ENCODE measurements at regions of chr6 and their contacts with region 1.

Region 1: GRCh38 chr6:133553652-133554051 is 312.5 kb downstream of the EYA4 start:
- DNase-seq: peak; percentile 17 to 31
- ATAC-seq: peak in 1 of 2 donors; percentile 26
- H3K4me3 ChIP-seq: no peak overlapping the region
- H3K27ac ChIP-seq: peak overlapping the region in 1 of 4 donors; percentile 79
- H3K4me1 ChIP-seq: peaks cover 33 to 41% of the 10 kb centered on the region in 2 donors
- H3K27me3 ChIP-seq: no peaks in the 10 kb centered on the region
- CTCF ChIP-seq: peak; percentile 48 to 74 (median 62)
- POLR2A ChIP-seq: no peak

Region 2: GRCh38 chr6:132820629-132821381 is 732.8 kb before region 1 on chr6:
- in situ Hi-C with region 1: loop called in 3 of 4 experiments (anchors 10 to 25 kb)
- intact Hi-C with region 1: loop called (anchors 2 kb)
- DNase-seq: no peak
- ATAC-seq: peak; percentile 13 to 30
- H3K4me3 ChIP-seq: no peak overlapping the region
- H3K27ac ChIP-seq: peak overlapping the region in 3 of 4 donors; percentile 21 to 85 (median 62)
- H3K4me1 ChIP-seq: peaks cover 30 to 32% of the 10 kb centered on the region in 2 donors
- H3K27me3 ChIP-seq: no peaks in the 10 kb centered on the region
- CTCF ChIP-seq: no peak
- POLR2A ChIP-seq: no peak

Region 3: DNA sequence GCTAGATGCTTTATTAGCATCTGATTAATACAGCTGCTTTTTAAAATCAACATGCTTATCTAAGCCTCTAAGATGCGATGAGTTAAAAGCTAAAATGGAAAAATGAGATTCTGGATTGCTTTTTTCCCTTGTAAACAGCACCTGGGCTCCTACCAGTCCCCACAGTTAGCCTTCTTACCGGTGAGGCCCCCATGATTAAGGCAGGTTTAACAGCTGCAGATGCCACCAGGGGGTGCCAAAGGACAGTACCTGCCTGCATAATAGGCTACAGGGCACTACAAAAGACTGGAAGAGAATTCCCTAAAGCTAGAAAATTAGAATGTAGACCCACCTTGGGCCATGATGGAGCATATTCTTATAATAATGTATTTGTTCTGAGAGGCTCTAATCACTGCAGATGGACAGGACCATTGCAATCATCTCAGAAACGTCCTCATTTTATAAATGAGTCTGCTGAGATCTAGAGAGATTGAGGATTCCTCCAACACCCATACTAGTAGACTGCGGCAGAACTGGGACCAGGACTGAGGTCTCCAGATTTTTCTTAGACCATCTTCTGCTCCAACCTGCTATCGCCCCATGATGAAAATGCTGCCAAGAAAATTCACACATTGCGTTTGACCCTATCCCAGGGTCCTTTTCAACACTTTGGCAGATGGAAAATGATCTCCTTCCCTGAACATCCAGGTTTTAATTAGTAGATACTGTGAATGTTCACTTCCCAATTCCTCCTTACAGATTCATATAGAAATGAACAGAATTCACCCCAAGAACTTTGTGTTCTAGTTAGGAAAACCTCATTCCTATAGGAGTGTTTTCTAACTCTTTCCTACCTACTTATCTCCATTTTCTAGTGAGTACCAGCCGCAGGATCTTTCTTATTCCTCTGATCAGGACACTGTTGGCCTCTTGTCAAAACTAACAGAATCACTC is 590.5 kb before region 1 on chr6:
- in situ Hi-C with region 1: loop called (anchors 5 to 25 kb)
- intact Hi-C with region 1: loop called (anchors 1 kb)
- DNase-seq: peak; percentile 50 to 68
- ATAC-seq: peak; percentile 63 to 87
- H3K4me3 ChIP-seq: no peak overlapping the region
- H3K27ac ChIP-seq: no peak overlapping the region
- H3K4me1 ChIP-seq: peaks cover 19 to 23% of the 10 kb centered on the region in 2 donors
- H3K27me3 ChIP-seq: no peaks in the 10 kb centered on the region
- CTCF ChIP-seq: peak; percentile 57 to 76 (median 70)
- POLR2A ChIP-seq: no peak

Region 4: DNA sequence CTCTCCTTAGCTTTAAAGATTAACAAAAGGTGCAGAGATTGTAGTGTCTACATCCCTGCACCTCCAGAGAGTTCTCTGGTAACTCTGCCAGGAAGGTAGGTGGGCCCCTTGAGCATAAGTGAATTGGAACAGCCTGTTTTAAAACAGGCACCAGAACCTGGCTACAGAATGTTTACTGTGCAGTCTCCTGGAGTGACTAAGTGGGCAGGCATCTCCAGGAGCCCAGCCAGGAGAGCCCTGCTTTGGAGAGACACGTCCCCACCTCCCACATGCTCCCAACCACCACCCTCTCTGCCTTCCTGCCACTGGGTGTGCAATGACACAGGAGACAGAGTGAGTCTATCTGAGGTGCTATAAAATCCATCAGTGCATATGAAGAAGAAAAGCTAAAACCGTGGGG is 422.8 kb before region 1 on chr6:
- in situ Hi-C with region 1: no loop called
- intact Hi-C with region 1: loop called (anchors 5 kb)
- DNase-seq: peak; percentile 91
- ATAC-seq: peak; percentile 84 to 91
- H3K4me3 ChIP-seq: no peak overlapping the region
- H3K27ac ChIP-seq: peak overlapping the region; percentile 73 to 85 (median 80)
- H3K4me1 ChIP-seq: peaks cover 32 to 38% of the 10 kb centered on the region in 2 donors
- H3K27me3 ChIP-seq: no peaks in the 10 kb centered on the region
- CTCF ChIP-seq: peak in 2 of 5 experiments; percentile 24 to 26
- POLR2A ChIP-seq: no peak

Region 5: GRCh38 chr6:133671376-133671775 is 117.7 kb after region 1 on chr6:
- in situ Hi-C with region 1: no loop called
- intact Hi-C with region 1: no loop called
- DNase-seq: no peak
- ATAC-seq: no peak
- H3K4me3 ChIP-seq: no peak overlapping the region
- H3K27ac ChIP-seq: no peak overlapping the region
- H3K4me1 ChIP-seq: no peaks in the 10 kb centered on the region
- H3K27me3 ChIP-seq: no peaks in the 10 kb centered on the region
- CTCF ChIP-seq: no peak
- POLR2A ChIP-seq: no peak

Measured in gastrocnemius medialis (tissue), 4 donors.